WTC11 (cell line): ENCODE measurements at regions of chr1 and their contacts with region 1.

Region 1: GRCh38 chr1:31715087-31715872 is 11.5 kb upstream of the COL16A1 start:
- DNase-seq: peak; percentile 99
- ATAC-seq: peak; percentile 92
- H3K4me3 Mint-ChIP-seq: peak overlapping the region; percentile 92
- H3K27ac Mint-ChIP-seq: peak overlapping the region; percentile 98
- H3K4me1 Mint-ChIP-seq: peaks cover 22% of the 10 kb centered on the region
- H3K27me3 Mint-ChIP-seq: peaks cover 4% of the 10 kb centered on the region
- CTCF ChIP-seq: peak; percentile 75

Region 2: DNA sequence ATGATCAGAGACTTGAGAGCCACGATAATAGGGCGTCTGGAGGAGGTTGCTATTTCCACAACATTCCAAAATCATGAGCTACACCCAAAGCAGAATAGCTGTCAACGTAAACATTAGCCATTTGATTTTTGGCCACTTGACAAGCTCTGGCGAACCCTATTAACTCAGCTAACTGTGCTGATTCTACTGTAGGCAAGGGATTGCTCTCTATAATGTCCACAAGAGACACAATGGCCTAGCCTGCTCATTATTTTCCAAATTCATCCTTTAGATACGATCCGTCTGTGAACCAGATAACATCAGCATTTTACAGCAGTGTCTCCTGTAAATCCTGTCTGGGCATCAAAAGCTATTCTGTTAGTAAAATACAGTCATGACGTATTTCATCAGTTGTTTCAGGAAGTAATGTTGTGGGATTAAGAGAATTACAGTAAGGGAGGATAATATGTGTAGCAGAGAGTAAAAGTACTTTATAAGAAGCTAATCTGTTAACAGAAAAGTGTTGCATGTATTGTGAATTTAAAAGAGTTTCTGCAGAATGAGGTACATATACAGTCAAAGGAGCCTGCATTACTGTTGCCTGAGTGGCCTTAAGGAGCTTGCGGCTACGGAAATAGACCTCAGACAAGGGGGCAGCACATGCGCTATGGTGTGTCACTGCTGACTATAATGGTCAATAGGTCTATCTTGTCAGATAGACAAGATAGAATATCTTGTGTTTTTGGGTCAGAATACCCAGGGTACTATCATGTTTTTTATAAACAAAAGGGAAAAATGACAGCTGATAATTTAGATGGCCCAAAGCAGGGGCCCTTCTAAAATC is 183.9 kb before region 1 on chr1:
- CTCF ChIA-PET with region 1: no interaction called
- POLR2A ChIA-PET with region 1: no interaction called
- DNase-seq: no peak
- ATAC-seq: peak; percentile 48; the same call in 1 of the 2 replicates
- H3K4me3 Mint-ChIP-seq: no peak overlapping the region
- H3K27ac Mint-ChIP-seq: no peak overlapping the region; the same call in 1 of the 2 replicates
- H3K4me1 Mint-ChIP-seq: peaks cover 4% of the 10 kb centered on the region
- H3K27me3 Mint-ChIP-seq: no peaks in the 10 kb centered on the region; the same call in none of the 2 replicates
- CTCF ChIP-seq: no peak

Region 3: DNA sequence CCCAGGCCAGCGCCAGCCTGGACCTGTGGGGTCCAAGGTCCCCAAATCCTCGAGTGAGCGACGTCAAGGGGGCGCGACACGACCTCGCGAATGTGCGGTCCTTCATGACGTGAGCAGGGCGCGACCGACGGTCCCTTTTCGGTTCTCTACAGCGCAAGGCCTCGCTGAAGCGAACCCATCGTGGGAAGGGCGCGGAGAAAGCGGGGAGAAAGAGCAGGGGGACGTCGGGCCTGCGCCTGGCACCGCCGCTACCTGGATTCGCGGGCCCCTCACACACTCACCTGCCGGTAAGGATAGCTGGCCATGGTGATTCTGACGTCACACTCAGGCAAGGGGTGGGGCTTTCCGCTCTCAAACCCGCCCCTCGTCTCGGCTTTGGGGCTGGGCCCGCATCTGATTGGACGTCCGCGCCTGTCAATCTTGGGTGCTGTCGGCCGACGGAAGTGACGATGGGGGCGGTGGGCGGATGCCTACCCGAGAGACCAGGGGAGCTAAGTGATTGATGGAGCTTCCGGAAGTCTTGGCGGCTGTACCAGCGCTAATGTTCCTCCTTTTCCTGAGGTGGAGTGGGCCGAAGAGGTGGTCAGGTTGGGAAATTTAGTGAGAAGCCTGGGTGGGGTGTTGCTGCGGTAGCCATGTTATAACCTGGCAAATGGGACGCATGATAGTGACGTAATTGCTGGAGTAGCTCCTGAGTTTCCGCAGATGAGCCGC is 70.6 kb before region 1 on chr1 and contains the start of gene PEF1:
- CTCF ChIA-PET with region 1: interaction called, 15 read pairs
- POLR2A ChIA-PET with region 1: no interaction called
- DNase-seq: peak; percentile 99
- ATAC-seq: peak; percentile 80
- H3K4me3 Mint-ChIP-seq: peak within 1 kb of the TSS; percentile 94
- H3K27ac Mint-ChIP-seq: peak within 1 kb of the TSS; percentile 100
- H3K4me1 Mint-ChIP-seq: peaks cover 19% of the 10 kb centered on the region
- H3K27me3 Mint-ChIP-seq: no peaks in the 10 kb centered on the region; the same call in 1 of the 2 replicates
- CTCF ChIP-seq: no peak
- total RNA-seq, gene PEF1: 33.7 to 37.0 TPM (median 35.5 TPM) in 3 replicates

Region 4: GRCh38 chr1:31669786-31670592 is 45.3 kb before region 1 on chr1:
- CTCF ChIA-PET with region 1: interaction called, 61 read pairs
- POLR2A ChIA-PET with region 1: no interaction called
- DNase-seq: no peak
- ATAC-seq: peak; percentile 59
- H3K4me3 Mint-ChIP-seq: peak overlapping the region; percentile 18; the same call in 1 of the 2 replicates
- H3K27ac Mint-ChIP-seq: 0 out of 2 replicates have a peak overlapping the region, but pooled peaks have one; percentile 16
- H3K4me1 Mint-ChIP-seq: peaks cover 19% of the 10 kb centered on the region
- H3K27me3 Mint-ChIP-seq: no peaks in the 10 kb centered on the region
- CTCF ChIP-seq: no peak

Region 5: DNA sequence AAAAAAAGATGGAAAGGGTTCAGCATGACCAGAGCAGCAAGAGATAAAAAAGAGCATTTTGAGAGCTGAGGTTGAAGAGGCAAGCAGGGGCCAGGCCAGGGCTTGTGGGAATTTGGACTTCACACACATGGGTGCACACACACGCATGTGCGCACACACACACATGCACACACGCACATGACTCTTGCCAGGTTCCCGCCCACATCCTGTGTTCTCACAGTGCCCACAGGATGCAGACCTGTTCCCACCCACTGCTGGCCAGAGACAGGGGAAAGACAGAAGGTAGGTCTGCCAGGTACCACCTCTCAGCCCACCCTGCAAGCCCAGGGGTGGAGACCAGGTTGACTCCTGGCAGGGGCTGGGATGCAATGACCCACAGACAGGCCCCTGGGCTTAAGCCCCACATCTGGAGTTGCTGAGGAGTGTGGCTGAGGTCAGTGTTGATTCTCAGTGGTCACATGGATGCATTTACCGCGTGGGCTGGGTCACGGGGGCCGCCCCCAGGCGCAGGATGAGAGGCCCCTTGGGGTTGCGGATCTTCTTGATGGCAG is 15.9 kb before region 1 on chr1:
- CTCF ChIA-PET with region 1: interaction called, 196 read pairs
- POLR2A ChIA-PET with region 1: interaction called, 15 read pairs
- DNase-seq: no peak
- ATAC-seq: no peak
- H3K4me3 Mint-ChIP-seq: no peak overlapping the region
- H3K27ac Mint-ChIP-seq: no peak overlapping the region
- H3K4me1 Mint-ChIP-seq: peaks cover 14% of the 10 kb centered on the region
- H3K27me3 Mint-ChIP-seq: peaks cover 3% of the 10 kb centered on the region
- CTCF ChIP-seq: no peak

Region 6: DNA sequence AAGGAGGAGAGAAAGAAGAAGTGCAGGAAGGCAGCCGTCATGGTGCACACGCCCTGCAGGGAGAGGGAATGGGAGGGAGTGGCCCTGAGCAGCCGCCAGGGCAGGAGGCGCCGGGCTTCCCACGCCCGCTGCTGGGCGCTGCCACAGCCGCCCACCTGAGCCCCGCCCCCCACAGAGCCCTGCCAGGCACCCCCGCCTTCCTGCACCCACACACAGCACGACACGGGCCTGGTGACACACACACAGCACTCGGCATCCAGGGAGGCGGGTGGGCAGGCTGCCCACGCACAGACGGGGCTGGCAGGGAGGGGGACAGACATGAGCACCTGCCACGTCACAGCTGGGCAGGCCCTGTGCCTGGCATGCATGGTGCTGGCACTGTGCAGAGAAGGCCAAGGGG is 21.4 kb after region 1 on chr1:
- CTCF ChIA-PET with region 1: interaction called, 179 read pairs
- POLR2A ChIA-PET with region 1: no interaction called
- DNase-seq: no peak
- ATAC-seq: no peak
- H3K4me3 Mint-ChIP-seq: no peak overlapping the region
- H3K27ac Mint-ChIP-seq: no peak overlapping the region
- H3K4me1 Mint-ChIP-seq: peaks cover 5% of the 10 kb centered on the region
- H3K27me3 Mint-ChIP-seq: no peaks in the 10 kb centered on the region
- CTCF ChIP-seq: no peak

Region 7: DNA sequence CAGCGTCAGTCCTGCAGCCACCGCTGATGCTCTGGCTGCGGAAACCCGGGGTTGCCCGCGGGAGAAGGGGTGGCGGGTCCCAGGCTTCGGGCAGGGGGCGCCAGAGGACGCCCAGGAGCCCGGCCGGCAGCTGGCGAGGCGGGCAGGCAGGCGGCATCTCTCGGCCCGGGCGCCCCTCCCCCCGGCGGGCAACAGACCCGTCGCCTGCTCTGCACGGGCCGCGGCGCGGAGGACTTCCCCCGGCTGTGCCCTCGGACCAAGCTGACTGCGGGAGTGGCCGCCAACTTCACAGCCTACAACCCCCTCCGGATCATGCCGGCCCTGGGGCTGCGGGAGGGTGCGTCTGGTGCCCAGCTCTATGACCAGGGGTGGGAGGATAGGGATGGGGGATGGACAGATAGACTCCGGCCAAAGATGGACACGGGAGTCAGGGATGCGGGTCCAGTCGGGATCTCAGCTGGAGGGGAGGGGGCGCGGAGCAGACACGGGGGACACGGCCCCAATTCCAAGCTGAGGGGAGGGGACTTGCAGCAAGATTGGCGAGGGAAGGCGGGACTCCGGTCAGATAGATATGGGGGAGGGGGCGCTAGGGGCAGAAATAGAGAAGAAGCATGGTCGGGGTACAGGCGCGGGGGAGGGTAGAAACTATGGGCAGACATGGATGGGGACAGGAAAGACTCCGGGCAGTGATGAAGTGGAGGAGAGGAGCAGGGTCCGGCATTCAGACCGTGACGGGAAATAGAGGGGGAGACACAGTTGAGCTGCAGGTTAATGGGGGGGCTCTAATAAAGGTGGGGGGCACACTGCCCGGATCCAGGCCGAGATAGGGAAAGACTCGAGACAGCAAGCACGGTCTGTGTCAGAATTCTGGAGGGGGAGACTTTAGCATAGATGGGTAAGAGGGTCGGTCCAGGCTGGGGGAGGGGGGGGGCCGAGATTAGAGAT is 47.7 kb after region 1 on chr1:
- CTCF ChIA-PET with region 1: interaction called, 96 read pairs
- POLR2A ChIA-PET with region 1: interaction called, 7 read pairs
- DNase-seq: peak; percentile 88
- ATAC-seq: peak; percentile 36
- H3K4me3 Mint-ChIP-seq: peak overlapping the region; percentile 82
- H3K27ac Mint-ChIP-seq: no peak overlapping the region
- H3K4me1 Mint-ChIP-seq: peaks cover 63% of the 10 kb centered on the region
- H3K27me3 Mint-ChIP-seq: peaks cover 20% of the 10 kb centered on the region
- CTCF ChIP-seq: peak; percentile 82

Region 8: DNA sequence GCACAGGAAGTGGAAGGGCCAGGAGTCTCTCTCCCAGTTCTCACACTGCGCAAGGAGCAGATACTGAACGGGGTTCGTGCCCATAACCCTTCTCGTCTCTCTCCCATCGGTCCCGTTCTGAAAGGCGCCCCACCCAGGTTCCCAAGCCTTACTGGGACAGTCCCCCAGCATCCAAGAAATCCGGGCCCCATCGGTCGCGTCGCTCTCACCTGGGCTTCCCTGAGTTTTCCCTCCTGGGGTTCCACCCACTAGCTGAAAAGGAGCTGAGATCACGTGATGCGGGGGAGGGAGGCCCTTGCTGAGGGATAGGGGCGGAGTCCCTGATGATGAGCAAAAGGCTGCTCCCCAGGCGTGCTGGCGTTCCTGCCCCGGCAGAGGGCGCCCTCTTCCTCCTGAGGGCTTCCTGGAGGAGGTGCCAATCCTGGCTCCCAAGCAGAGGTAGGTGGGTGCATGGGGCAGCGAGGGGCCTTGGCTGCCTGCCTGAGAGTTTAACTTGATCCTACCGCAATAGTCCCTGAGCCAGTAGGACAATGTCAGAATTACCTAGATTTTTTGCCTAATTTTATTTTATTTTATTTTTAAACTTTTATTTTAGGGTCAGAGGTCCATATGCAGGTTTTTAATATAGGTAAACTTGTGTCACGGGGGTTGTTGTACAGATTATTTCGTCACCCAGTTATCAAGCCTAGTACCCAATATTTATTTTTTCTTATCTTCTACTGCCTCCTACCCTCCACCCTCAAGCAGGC is 100.6 kb after region 1 on chr1 and contains the start of gene SPOCD1:
- CTCF ChIA-PET with region 1: interaction called, 11 read pairs
- POLR2A ChIA-PET with region 1: no interaction called
- DNase-seq: peak; percentile 99
- ATAC-seq: peak; percentile 95
- H3K4me3 Mint-ChIP-seq: peak within 1 kb of the TSS; percentile 86
- H3K27ac Mint-ChIP-seq: 0 out of 2 replicates have a peak within 1 kb of the TSS, but pooled peaks have one; percentile 64
- H3K4me1 Mint-ChIP-seq: peaks cover 4% of the 10 kb centered on the region; the same call in 1 of the 2 replicates
- H3K27me3 Mint-ChIP-seq: peaks cover 5% of the 10 kb centered on the region
- CTCF ChIP-seq: peak; percentile 94
- total RNA-seq, gene SPOCD1: 3.0 to 4.9 TPM (median 3.7 TPM) in 3 replicates